ENCODE measurements at regions of chr6 and their contacts with region 1.

Region 1: DNA sequence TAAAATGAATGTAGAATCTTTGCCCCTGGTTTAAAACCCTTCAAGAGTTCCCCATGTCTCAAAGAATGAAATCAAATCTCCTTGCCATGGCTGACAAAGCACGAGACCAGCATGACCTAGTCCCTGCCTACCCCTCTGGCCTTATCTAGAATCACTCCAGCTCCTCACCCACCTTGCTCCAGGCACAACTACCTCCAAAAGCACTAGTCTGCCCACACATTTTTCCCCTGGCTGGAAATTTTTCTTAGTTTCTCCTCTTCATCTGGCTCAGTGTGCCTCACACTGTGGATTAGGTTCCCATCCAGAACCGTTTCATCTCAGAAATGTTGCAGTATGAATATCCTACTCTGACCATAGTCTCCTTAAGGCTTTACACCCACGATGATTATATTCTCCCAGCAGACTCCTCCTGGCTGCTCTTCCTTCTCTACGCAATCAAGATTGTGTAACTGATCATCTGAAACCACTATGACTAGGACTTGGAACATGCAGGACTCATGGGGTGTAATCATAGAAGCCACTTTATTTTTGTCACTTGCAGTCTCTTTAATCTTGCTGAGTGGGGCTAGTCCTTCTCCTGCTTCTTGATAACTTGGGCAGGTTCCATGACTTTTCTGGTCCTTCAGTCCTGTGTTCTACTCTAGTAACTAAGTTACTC is 7.8 kb upstream of the MRS2 start:
- DNase-seq: no peak
- ATAC-seq: peak; percentile 30
- H3K4me3 ChIP-seq: no peak overlapping the region
- H3K27ac ChIP-seq: no peak overlapping the region
- H3K4me1 ChIP-seq: no peaks in the 10 kb centered on the region
- H3K27me3 ChIP-seq: no peaks in the 10 kb centered on the region
- CTCF ChIP-seq: no peak
- POLR2A ChIP-seq: no peak

Region 2: DNA sequence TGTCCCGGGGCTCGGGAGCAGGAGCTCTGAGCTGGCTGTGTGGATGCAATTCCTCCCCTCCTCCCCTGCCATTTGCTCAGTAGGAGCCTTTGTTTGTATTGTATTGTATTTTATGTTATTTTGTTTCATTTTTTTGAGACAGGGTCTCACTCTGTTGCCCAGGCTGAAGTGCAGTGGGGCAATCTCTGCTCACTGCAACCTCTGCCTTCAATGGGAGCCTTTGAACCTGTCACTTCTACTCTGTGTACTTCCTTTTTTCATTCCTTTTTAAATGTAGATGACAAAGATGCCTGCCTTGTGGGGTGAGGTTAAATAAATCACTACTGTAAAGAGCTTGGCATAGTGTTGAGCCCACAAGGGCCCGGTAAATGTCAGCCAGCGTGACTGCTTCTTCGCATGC is 107.7 kb before region 1 on chr6:
- intact Hi-C with region 1: loop called (anchors 5 kb)
- DNase-seq: no peak
- ATAC-seq: no peak
- H3K4me3 ChIP-seq: no peak overlapping the region
- H3K27ac ChIP-seq: no peak overlapping the region
- H3K4me1 ChIP-seq: peaks cover 18% of the 10 kb centered on the region
- H3K27me3 ChIP-seq: no peaks in the 10 kb centered on the region
- CTCF ChIP-seq: no peak
- POLR2A ChIP-seq: no peak